Gastrocnemius medialis (tissue), 4 donors: ENCODE measurements at regions of chr9 and their contacts with region 1.

Region 1: DNA sequence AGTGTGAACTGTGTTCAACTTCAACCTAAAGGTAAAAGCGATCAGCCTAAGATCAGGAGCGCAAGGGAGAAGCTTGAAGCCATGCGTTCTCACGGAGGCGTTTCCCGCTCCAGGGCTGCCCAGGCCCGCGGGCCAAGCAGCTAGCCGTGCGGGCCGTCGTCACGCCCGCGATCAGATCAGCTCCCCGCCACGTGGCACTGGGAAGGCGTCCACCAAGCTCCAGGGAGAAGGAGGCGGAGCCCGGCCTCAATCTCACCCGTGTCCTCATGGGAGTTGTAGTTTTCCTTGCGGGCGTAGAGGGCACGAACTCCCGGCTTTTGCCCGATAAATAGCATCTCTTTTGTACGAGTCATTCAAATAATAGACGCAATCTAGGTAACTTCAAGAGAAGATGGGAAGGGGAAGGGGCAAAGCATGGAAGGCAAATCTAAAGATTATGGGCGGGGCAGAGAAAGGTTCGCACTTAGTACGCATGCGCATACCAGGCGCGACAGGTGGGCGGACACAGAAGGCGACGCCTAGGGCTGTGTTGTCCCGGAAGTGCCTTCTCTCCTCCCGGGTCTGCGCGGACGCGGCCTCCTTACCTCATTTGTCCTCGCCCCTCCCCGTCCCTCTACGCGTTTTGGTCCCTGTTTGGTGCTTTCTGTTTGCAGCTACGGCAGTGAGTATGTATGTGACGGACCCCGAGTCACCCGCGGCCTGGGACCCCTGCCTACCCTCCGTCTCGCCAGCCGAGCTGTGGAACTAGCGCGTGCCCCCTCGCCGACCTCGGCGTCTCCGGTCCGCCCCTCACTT is 40.8 kb upstream of the ZCCHC7 start:
- DNase-seq: peak; percentile 88 to 92
- ATAC-seq: peak; percentile 98
- H3K4me3 ChIP-seq: peak overlapping the region; percentile 79 to 100 (median 99)
- H3K27ac ChIP-seq: peak overlapping the region; percentile 88 to 94 (median 92)
- H3K4me1 ChIP-seq: peaks cover 20 to 24% of the 10 kb centered on the region in 2 donors
- H3K27me3 ChIP-seq: no peaks in the 10 kb centered on the region
- CTCF ChIP-seq: no peak
- POLR2A ChIP-seq: peak; percentile 69 to 73

Region 2: DNA sequence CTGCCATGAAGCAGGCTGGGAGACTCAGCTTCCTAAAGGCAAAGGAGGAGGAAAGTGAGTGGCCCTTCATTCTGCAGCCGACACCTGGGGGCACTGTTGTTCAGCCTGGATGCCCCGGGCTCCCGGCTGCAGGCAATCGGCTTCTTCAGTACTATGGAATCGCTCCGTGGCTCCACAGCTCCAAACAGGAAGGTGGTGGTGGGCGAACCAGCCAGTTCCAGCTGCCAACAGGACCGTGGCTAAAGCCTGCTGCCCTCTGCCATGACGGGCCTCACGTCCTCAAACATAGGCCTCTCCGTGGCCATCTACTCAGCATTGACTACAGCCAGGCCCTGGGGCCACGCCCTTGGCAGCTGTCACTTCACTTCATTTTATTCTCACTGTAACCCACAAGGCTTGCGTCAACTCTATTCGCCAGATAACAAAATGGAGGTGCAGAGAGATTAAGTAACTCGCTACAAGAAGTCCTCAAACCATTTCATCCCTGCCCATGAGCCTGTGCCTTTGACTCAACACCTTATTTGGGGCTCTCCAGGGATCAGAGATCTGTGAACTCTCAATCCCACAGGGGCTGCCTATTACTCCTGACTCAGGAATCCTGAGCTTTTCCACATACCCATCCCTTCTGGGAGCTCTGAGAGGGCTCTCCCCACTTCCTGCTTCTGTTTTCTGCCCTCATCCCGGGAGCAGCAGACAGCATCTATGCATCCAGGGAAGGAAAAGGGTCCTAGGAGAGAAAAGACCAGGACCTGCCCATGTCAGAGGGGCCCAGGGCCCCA is 83.5 kb before region 1 on chr9:
- in situ Hi-C with region 1: no loop called
- intact Hi-C with region 1: no loop called
- DNase-seq: no peak
- ATAC-seq: no peak
- H3K4me3 ChIP-seq: no peak overlapping the region
- H3K27ac ChIP-seq: no peak overlapping the region
- H3K4me1 ChIP-seq: no peaks in the 10 kb centered on the region
- H3K27me3 ChIP-seq: peaks cover 6 to 17% (median 11%) of the 10 kb centered on the region in 3 donors
- CTCF ChIP-seq: no peak
- POLR2A ChIP-seq: no peak

Region 3: GRCh38 chr9:37027582-37028419 is 51.8 kb before region 1 on chr9:
- in situ Hi-C with region 1: no loop called
- intact Hi-C with region 1: loop called (anchors 1 kb)
- DNase-seq: peak; percentile 55 to 72
- ATAC-seq: peak; percentile 81 to 89
- H3K4me3 ChIP-seq: peak overlapping the region in 3 of 4 donors; percentile 19 to 45 (median 19)
- H3K27ac ChIP-seq: no peak overlapping the region
- H3K4me1 ChIP-seq: peaks cover 25 to 26% of the 10 kb centered on the region in 2 donors
- H3K27me3 ChIP-seq: peaks cover 98 to 99% (median 98%) of the 10 kb centered on the region in 3 donors
- CTCF ChIP-seq: no peak
- POLR2A ChIP-seq: no peak

Region 4: DNA sequence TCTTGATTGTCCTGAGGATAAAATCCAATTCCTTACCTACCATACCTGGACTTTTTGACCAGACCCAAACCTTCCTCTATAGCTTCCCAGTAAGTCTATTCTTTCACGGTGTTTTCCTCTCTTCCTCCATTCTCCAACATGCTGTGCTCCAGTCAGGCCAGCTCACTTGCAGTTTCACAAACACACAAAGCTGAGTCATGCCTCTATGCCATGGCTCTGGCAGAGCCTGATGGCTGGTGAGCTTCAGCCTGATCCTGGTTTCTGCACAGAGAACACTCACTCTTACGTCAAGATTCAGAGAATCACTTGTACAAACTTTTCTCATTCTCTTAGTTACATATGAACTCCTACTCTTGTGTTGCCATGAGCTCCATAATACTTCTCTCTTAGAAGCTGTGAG is 17.8 kb before region 1 on chr9:
- in situ Hi-C with region 1: no loop called
- intact Hi-C with region 1: no loop called
- DNase-seq: no peak
- ATAC-seq: no peak
- H3K4me3 ChIP-seq: no peak overlapping the region
- H3K27ac ChIP-seq: no peak overlapping the region
- H3K4me1 ChIP-seq: no peaks in the 10 kb centered on the region
- H3K27me3 ChIP-seq: peaks cover 5 to 17% (median 7%) of the 10 kb centered on the region in 3 donors
- CTCF ChIP-seq: no peak
- POLR2A ChIP-seq: no peak

Region 5: GRCh38 chr9:37119907-37120842 is 40.6 kb after region 1 on chr9 and contains the start of gene ZCCHC7:
- in situ Hi-C with region 1: loop called in 1 of 4 experiments (anchors 5 kb)
- intact Hi-C with region 1: loop called (anchors 1 kb)
- DNase-seq: peak; percentile 93 to 94
- ATAC-seq: peak; percentile 96 to 97
- H3K4me3 ChIP-seq: peak within 1 kb of the TSS; percentile 89 to 100 (median 96)
- H3K27ac ChIP-seq: peak within 1 kb of the TSS; percentile 91 to 98 (median 97)
- H3K4me1 ChIP-seq: peaks cover 17 to 19% of the 10 kb centered on the region in 2 donors
- H3K27me3 ChIP-seq: no peaks in the 10 kb centered on the region
- CTCF ChIP-seq: no peak
- POLR2A ChIP-seq: peak; percentile 85 to 88
- total RNA-seq, gene ZCCHC7: 4.8 to 11.2 (median 6.9) TPM

Region 6: GRCh38 chr9:37329576-37329975 is 250.0 kb after region 1 on chr9:
- in situ Hi-C with region 1: no loop called
- intact Hi-C with region 1: loop called (anchors 10 kb)
- DNase-seq: no peak
- ATAC-seq: no peak
- H3K4me3 ChIP-seq: no peak overlapping the region
- H3K27ac ChIP-seq: no peak overlapping the region
- H3K4me1 ChIP-seq: no peaks in the 10 kb centered on the region
- H3K27me3 ChIP-seq: no peaks in the 10 kb centered on the region
- CTCF ChIP-seq: no peak
- POLR2A ChIP-seq: no peak